ENCODE measurements at regions of chr9 and their contacts with region 1.

Region 1: GRCh38 chr9:8486095-8486494 is 686.5 kb upstream of the DMAC1 start:
- DNase-seq: no peak
- ATAC-seq: no peak
- H3K4me3 ChIP-seq: no peak overlapping the region
- H3K27ac ChIP-seq: no peak overlapping the region
- H3K4me1 ChIP-seq: no peaks in the 10 kb centered on the region
- H3K27me3 ChIP-seq: no peaks in the 10 kb centered on the region
- CTCF ChIP-seq: no peak
- POLR2A ChIP-seq: no peak
- RAD21 ChIP-seq: no peak

Region 2: DNA sequence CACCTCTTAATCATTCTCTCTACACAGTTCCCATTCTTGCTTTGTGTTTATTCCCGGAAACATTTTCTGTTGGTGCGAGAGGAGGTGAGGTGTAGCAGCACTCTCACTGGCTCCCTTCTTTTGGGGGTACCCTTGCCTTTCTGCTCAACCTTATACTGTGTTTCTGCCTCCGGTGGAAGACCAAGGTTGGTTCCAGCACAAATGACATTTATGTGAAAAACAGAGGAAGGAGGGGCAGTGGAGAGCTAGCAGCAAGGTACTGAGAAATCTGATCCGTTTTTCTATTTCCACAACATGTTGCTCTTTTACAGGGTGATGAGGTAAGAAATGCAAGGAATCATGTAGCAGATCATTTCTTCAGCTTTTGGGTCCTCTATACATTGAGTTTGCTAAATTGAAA is 38.5 kb before region 1 on chr9:
- CTCF ChIA-PET with region 1: no interaction called
- POLR2A ChIA-PET with region 1: no interaction called
- dilution Hi-C with region 1: no loop called
- in situ Hi-C with region 1: no loop called
- intact Hi-C with region 1: no loop called
- DNase-seq: no peak
- ATAC-seq: no peak
- H3K4me3 ChIP-seq: no peak overlapping the region
- H3K27ac ChIP-seq: no peak overlapping the region
- H3K4me1 ChIP-seq: no peaks in the 10 kb centered on the region
- H3K27me3 ChIP-seq: no peaks in the 10 kb centered on the region
- CTCF ChIP-seq: no peak
- POLR2A ChIP-seq: no peak
- RAD21 ChIP-seq: no peak

Region 3: GRCh38 chr9:8857926-8858595 is 372.0 kb after region 1 on chr9:
- CTCF ChIA-PET with region 1: no interaction called
- POLR2A ChIA-PET with region 1: no interaction called
- dilution Hi-C with region 1: no loop called
- in situ Hi-C with region 1: no loop called
- intact Hi-C with region 1: loop called (anchors 10 kb)
- DNase-seq: no peak
- ATAC-seq: peak; percentile 84
- H3K4me3 ChIP-seq: peak overlapping the region; percentile 38; the same call in 1 of the 2 replicates
- H3K27ac ChIP-seq: no peak overlapping the region
- H3K4me1 ChIP-seq: no peaks in the 10 kb centered on the region
- H3K27me3 ChIP-seq: peaks cover 15% of the 10 kb centered on the region; the same call in 1 of the 2 replicates
- CTCF ChIP-seq: no peak
- POLR2A ChIP-seq: no peak
- RAD21 ChIP-seq: no peak